ENCODE measurements at regions of chr1 and their contacts with region 1.

Region 1: DNA sequence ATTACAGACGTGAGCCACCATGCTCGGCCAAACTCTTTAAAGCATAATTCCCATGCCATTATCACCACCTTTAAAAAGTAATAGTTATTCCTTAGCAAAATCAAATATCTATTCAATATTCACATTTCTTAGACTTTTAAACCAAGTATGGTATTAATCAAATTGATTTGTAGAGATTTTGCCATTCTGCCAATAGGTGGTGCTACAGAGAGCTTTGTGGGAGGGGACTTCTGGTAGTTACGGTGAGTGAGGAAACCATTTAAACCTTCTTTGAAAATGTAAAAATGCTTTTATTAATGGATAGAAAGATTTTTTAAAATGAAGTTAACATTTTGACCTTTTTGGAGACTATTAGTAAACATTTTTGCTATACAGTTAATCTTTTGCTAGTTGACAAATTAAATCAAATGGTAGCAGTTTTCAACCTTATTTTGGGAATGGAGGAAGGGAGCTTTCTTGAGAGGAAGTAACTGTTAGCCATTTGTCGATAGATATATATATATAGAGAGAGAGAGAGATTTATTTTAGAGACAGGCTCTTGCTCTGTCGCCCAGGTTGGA is 19.3 kb downstream of the IARS2 start:
- DNase-seq: peak; percentile 58 to 83 (median 77)
- H3K4me3 ChIP-seq: no peak overlapping the region
- H3K27ac ChIP-seq: no peak overlapping the region
- H3K4me1 ChIP-seq: no peaks in the 10 kb centered on the region
- H3K27me3 ChIP-seq: no peaks in the 10 kb centered on the region

Region 2: DNA sequence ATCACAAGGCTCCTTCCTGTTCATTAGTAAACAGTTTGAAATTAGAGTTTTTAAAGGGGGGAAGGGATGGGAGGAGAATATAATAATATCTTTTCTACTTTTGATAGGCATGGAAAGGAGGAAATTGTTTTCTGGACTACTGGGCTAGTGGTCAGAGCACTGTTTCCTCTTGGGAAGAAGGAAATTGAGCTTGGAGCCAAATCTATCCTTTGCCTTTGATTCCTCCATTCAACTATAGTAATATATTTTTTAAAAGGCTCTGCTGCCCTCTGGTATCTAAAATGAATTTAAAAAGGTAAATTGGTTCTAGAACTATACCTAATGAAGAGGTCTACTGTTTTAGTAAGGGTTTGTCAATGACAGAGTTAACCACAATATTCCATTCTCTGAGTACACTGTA is 13.4 kb before region 1 on chr1:
- CTCF ChIA-PET with region 1: interaction called, 11 read pairs
- POLR2A ChIA-PET with region 1: no interaction called
- DNase-seq: no peak
- H3K4me3 ChIP-seq: no peak overlapping the region
- H3K27ac ChIP-seq: no peak overlapping the region
- H3K4me1 ChIP-seq: peaks cover 0 to 9% (median 5%) of the 10 kb centered on the region in 4 experiments
- H3K27me3 ChIP-seq: no peaks in the 10 kb centered on the region

Region 3: DNA sequence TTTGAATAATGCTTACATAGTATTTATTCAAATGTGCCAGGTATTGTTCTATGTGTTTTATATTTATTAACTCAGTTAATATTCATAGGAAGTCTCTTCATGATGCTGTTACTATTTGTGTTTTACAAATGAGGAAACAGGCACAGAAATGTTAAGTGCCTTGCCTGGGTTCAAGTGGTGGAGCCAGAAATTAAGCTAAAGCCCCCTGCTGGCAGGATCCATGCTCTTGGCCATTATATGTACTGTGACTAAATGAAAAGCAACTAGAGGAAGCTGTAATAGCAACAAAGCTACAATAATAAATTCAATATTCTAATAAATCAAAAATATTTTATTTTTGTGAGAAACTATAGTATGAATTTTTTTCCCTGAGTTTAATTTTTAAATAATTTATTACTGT is 10.7 kb after region 1 on chr1:
- CTCF ChIA-PET with region 1: interaction called, 15 read pairs
- POLR2A ChIA-PET with region 1: no interaction called
- DNase-seq: peak; percentile 22 to 46 (median 46)
- H3K4me3 ChIP-seq: no peak overlapping the region
- H3K27ac ChIP-seq: no peak overlapping the region
- H3K4me1 ChIP-seq: peaks cover 0 to 5% (median 1%) of the 10 kb centered on the region in 4 experiments
- H3K27me3 ChIP-seq: no peaks in the 10 kb centered on the region